A673 (cell line): ENCODE measurements at regions of chr2 and their contacts with region 1.

Region 1: DNA sequence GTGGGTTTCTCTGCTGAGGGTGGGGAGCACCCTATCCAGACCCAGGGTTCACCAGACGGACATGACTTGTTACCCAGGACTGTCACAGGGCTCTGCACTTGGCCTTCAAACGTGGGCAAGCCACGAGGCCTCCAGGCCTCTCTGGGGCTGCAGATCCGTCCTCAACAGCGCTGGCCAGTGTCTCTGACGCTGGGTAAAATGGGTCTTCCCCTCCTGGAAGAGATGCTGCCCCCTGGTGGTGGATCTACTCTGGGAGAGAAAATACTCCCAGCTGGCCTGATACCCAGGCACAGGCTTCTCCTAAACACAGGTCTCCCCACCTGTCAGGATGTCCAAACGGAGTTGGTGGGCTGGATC is 3.7 kb downstream of the GPR17 start:
- DNase-seq: peak; percentile 91
- H3K4me3 ChIP-seq: no peak overlapping the region
- H3K27ac ChIP-seq: no peak overlapping the region
- H3K4me1 ChIP-seq: peaks cover 5% of the 10 kb centered on the region
- H3K27me3 ChIP-seq: no peaks in the 10 kb centered on the region
- CTCF ChIP-seq: peak; percentile 92

Region 2: GRCh38 chr2:126049461-126049860 is 1600.2 kb before region 1 on chr2:
- CTCF ChIA-PET with region 1: no interaction called
- POLR2A ChIA-PET with region 1: no interaction called
- intact Hi-C with region 1: no loop called
- DNase-seq: no peak
- H3K4me3 ChIP-seq: no peak overlapping the region
- H3K27ac ChIP-seq: no peak overlapping the region
- H3K4me1 ChIP-seq: no peaks in the 10 kb centered on the region
- H3K27me3 ChIP-seq: no peaks in the 10 kb centered on the region
- CTCF ChIP-seq: no peak

Region 3: GRCh38 chr2:127051116-127052056 is 598.3 kb before region 1 on chr2:
- CTCF ChIA-PET with region 1: no interaction called
- POLR2A ChIA-PET with region 1: no interaction called
- intact Hi-C with region 1: no loop called
- DNase-seq: no peak
- H3K4me3 ChIP-seq: no peak overlapping the region
- H3K27ac ChIP-seq: no peak overlapping the region
- H3K4me1 ChIP-seq: no peaks in the 10 kb centered on the region
- H3K27me3 ChIP-seq: no peaks in the 10 kb centered on the region
- CTCF ChIP-seq: no peak

Region 4: DNA sequence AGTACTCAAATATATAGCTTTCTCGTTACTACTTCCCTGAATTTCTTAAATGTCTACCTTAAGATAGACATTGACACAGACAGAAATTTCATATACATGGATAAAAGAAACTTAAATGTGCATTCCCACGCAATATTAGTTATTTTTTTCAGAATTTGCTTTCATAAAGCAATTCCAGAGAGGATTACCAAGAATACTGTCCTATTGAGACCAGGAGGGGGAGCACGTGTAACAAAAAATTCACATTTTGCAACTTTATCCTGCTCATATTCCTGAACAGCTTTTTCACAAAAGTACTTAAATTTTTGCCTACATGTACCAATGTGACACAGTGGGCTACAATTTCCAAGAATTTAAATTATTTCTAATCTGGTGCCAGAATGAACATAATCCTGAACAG is 325.0 kb before region 1 on chr2:
- CTCF ChIA-PET with region 1: no interaction called
- POLR2A ChIA-PET with region 1: no interaction called
- intact Hi-C with region 1: loop called (anchors 2 kb)
- DNase-seq: peak; percentile 66
- H3K4me3 ChIP-seq: no peak overlapping the region
- H3K27ac ChIP-seq: no peak overlapping the region
- H3K4me1 ChIP-seq: no peaks in the 10 kb centered on the region
- H3K27me3 ChIP-seq: no peaks in the 10 kb centered on the region
- CTCF ChIP-seq: peak; percentile 78

Region 5: GRCh38 chr2:127591221-127591923 is 58.3 kb before region 1 on chr2:
- CTCF ChIA-PET with region 1: interaction called, 29 read pairs
- POLR2A ChIA-PET with region 1: interaction called, 3 read pairs
- intact Hi-C with region 1: loop called (anchors 1 kb)
- DNase-seq: peak; percentile 77
- H3K4me3 ChIP-seq: no peak overlapping the region
- H3K27ac ChIP-seq: no peak overlapping the region
- H3K4me1 ChIP-seq: no peaks in the 10 kb centered on the region
- H3K27me3 ChIP-seq: no peaks in the 10 kb centered on the region
- CTCF ChIP-seq: peak; percentile 96

Region 6: GRCh38 chr2:127951026-127951425 is 301.4 kb after region 1 on chr2:
- CTCF ChIA-PET with region 1: no interaction called
- POLR2A ChIA-PET with region 1: no interaction called
- intact Hi-C with region 1: no loop called
- DNase-seq: no peak
- H3K4me3 ChIP-seq: no peak overlapping the region
- H3K27ac ChIP-seq: no peak overlapping the region
- H3K4me1 ChIP-seq: no peaks in the 10 kb centered on the region
- H3K27me3 ChIP-seq: no peaks in the 10 kb centered on the region
- CTCF ChIP-seq: no peak